ENCODE measurements at regions of chr4 and their contacts with region 1.

Region 1: GRCh38 chr4:26208237-26208994 is 112.4 kb upstream of the RBPJ start:
- DNase-seq: no peak
- ATAC-seq: no peak
- H3K4me3 ChIP-seq: no peak overlapping the region
- H3K27ac ChIP-seq: no peak overlapping the region
- H3K4me1 ChIP-seq: no peaks in the 10 kb centered on the region
- H3K27me3 ChIP-seq: no peaks in the 10 kb centered on the region
- CTCF ChIP-seq: no peak

Region 2: GRCh38 chr4:25813448-25814106 is 394.8 kb before region 1 on chr4:
- CTCF ChIA-PET with region 1: interaction called, 10 read pairs
- POLR2A ChIA-PET with region 1: no interaction called
- in situ Hi-C with region 1: no loop called
- intact Hi-C with region 1: no loop called
- DNase-seq: no peak
- ATAC-seq: no peak
- H3K4me3 ChIP-seq: no peak overlapping the region
- H3K27ac ChIP-seq: no peak overlapping the region
- H3K4me1 ChIP-seq: no peaks in the 10 kb centered on the region
- H3K27me3 ChIP-seq: no peaks in the 10 kb centered on the region
- CTCF ChIP-seq: no peak

Region 3: DNA sequence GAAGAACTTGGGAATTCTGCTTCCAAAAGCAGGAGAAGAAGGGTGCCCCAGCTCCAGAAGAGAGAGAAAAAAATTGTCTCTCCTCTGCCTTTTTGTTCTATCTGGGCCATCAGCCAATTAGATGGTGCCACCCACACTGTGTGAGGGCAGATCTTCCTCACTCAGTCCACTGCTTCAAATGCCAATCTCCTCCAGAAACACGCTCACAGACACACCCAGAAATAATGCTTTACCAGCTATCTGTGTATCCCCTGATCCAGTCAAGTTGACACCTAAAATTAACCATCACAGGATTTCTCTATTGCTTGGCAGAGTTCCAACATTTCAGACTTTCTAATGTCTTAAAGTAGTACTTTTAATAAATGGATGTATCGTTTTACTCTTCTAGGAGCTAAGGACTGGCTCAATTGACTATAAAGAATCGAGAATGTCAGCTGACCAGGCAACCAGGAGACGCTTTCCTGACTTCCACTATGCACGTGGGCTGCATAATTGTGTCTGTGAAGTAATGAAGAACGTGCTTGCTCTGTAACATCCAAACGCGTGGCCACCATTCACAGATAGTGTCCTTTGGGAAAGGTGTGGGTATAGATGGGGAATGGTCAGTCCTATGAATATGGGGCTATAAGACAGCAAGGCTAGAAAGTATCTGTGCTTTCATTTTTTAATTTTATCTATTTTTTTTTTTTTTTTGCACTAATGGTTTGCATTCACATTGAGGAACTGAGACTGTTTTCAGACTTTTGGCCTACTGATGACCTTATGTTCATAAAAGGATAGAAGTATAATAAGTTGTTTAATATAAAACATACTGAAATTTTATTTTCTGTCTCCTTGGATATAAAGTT is 304.3 kb before region 1 on chr4:
- CTCF ChIA-PET with region 1: no interaction called
- POLR2A ChIA-PET with region 1: no interaction called
- in situ Hi-C with region 1: no loop called
- intact Hi-C with region 1: no loop called
- DNase-seq: no peak
- ATAC-seq: no peak
- H3K4me3 ChIP-seq: no peak overlapping the region
- H3K27ac ChIP-seq: no peak overlapping the region
- H3K4me1 ChIP-seq: no peaks in the 10 kb centered on the region
- H3K27me3 ChIP-seq: no peaks in the 10 kb centered on the region
- CTCF ChIP-seq: no peak

Region 4: DNA sequence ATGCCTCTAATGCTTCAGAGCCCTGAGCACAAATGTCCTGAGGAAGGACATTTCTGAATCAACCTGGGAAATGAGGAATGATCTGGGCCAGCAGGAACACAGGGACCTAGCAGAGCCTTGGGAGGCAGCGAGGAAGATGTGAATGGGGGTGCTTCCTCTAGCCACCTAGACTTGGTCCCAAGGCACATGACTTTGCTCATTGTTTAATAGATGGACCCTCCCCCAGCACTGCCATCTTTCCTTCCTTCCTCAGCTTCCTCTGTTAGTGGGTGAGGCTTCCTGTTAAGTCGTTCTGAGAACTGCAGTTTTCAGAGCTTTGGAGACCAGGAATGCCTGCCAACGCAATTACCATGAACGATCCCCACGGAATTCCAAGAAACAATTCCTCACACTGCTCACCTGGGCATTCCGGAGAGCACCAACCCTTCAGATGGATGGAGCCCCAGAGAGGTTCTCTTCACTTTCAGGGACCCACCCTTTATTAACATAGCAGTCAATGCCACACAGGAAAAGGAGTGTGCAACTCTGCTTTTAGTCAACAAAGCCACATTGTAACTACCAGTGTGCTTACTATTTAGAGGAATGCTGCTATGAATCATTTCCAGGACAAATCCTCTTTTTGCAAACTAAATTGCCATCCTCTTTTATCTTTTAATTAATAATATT is 603.8 kb after region 1 on chr4:
- CTCF ChIA-PET with region 1: no interaction called
- POLR2A ChIA-PET with region 1: no interaction called
- in situ Hi-C with region 1: no loop called
- intact Hi-C with region 1: no loop called
- DNase-seq: no peak
- ATAC-seq: no peak
- H3K4me3 ChIP-seq: no peak overlapping the region
- H3K27ac ChIP-seq: no peak overlapping the region
- H3K4me1 ChIP-seq: no peaks in the 10 kb centered on the region
- H3K27me3 ChIP-seq: no peaks in the 10 kb centered on the region
- CTCF ChIP-seq: no peak

Measured in Panc1 (cell line).